MCF 10A (cell line): ENCODE measurements at regions of chr3 and their contacts with region 1.

Region 1: DNA sequence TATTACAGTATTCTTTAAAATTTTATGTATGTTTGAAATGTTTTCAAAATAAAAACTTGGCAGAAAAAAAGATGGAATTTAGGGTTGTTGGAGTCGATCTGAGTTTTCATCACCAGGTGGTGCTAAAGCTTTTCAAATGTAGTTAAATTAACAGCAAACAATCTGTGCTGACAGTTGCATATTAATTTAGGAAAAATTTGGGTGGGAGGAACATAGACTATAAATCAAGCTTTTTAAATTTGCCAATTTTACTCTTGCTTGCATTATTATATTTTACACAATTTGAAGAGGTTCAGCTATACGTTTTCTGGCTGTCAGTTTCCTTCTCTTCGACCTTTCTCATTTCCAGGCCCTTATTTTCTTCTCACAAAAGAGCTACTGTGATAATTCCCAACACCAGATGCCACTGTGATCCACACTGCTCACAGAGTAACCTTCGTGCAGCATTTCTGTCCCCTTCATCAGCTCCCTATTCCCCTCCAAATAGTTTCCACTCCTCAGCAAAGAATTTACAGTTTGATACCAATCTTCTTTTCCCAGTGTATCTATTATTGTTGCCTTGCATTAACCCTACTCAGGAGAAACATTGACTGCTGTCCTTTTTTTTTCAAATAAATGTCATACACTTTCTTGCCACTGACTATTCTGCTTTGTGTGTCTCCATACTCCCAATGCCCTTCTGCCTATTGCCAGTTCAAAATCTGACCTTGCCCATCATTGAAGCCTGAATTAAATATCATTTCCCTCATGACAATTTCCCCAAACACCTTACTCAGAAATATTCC is 53.4 kb upstream of the EIF5A2 start:
- DNase-seq: peak; percentile 45
- H3K4me3 Mint-ChIP-seq: no peak overlapping the region
- H3K27ac Mint-ChIP-seq: no peak overlapping the region
- H3K4me1 Mint-ChIP-seq: no peaks in the 10 kb centered on the region
- H3K27me3 Mint-ChIP-seq: no peaks in the 10 kb centered on the region
- CTCF ChIP-seq: peak; percentile 76

Region 2: GRCh38 chr3:170811928-170812591 is 149.7 kb before region 1 on chr3:
- CTCF ChIA-PET with region 1: no interaction called
- POLR2A ChIA-PET with region 1: no interaction called
- intact Hi-C with region 1: no loop called
- DNase-seq: peak; percentile 90
- H3K4me3 Mint-ChIP-seq: peak overlapping the region; percentile 55
- H3K27ac Mint-ChIP-seq: peak overlapping the region; percentile 82
- H3K4me1 Mint-ChIP-seq: peaks cover 37% of the 10 kb centered on the region
- H3K27me3 Mint-ChIP-seq: no peaks in the 10 kb centered on the region
- CTCF ChIP-seq: peak; percentile 89

Region 3: GRCh38 chr3:170896781-170897180 is 65.0 kb before region 1 on chr3:
- CTCF ChIA-PET with region 1: no interaction called
- POLR2A ChIA-PET with region 1: no interaction called
- intact Hi-C with region 1: no loop called
- DNase-seq: no peak
- H3K4me3 Mint-ChIP-seq: no peak overlapping the region
- H3K27ac Mint-ChIP-seq: no peak overlapping the region
- H3K4me1 Mint-ChIP-seq: no peaks in the 10 kb centered on the region
- H3K27me3 Mint-ChIP-seq: no peaks in the 10 kb centered on the region
- CTCF ChIP-seq: no peak

Region 4: DNA sequence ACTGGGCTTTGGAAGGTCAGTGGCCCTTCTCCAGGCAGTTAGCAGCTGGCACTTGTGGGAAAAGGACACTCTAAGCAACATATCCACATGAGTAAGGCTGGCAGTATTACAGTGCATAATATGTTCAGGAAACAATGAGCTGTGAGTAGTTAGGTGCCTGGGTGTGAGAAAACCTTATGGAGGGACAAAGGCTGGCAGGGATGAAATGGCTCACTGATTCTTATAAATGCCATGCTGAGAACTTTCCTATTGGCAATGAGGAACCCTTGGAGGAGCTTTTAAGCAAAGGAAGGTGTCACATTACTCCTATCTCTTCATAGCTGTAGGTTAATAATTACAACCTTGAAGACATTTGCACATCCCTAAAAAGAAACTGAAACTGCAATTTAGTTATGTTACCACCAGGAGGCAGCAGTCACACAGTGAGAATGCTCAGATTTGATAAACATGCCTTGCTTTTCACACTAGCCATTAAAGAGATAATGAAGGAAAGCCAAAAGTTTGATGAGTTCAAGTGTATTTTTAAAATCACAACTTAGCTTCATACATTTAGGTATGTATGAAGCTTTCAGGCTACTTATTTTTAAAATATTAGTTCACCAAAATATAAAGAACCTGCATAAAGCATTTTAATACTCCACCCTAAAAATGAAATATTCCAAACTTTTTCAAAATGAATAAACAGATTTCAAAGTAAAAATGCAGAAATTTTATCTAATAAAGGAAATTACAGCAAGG is 201.3 kb after region 1 on chr3:
- CTCF ChIA-PET with region 1: interaction called, 5 read pairs
- POLR2A ChIA-PET with region 1: no interaction called
- intact Hi-C with region 1: loop called (anchors 5 kb)
- DNase-seq: peak; percentile 46
- H3K4me3 Mint-ChIP-seq: no peak overlapping the region
- H3K27ac Mint-ChIP-seq: no peak overlapping the region
- H3K4me1 Mint-ChIP-seq: peaks cover 10% of the 10 kb centered on the region
- H3K27me3 Mint-ChIP-seq: no peaks in the 10 kb centered on the region
- CTCF ChIP-seq: peak; percentile 51

Region 5: GRCh38 chr3:171187706-171188290 is 226.0 kb after region 1 on chr3:
- CTCF ChIA-PET with region 1: interaction called, 8 read pairs
- POLR2A ChIA-PET with region 1: no interaction called
- intact Hi-C with region 1: loop called (anchors 2 kb)
- DNase-seq: peak; percentile 60
- H3K4me3 Mint-ChIP-seq: no peak overlapping the region
- H3K27ac Mint-ChIP-seq: no peak overlapping the region
- H3K4me1 Mint-ChIP-seq: peaks cover 22% of the 10 kb centered on the region
- H3K27me3 Mint-ChIP-seq: no peaks in the 10 kb centered on the region
- CTCF ChIP-seq: peak; percentile 70